Activated T-helper 1 cell treated with anti-CD3 and anti-CD28 coated beads, Interleukin-12 subunit alpha, Interleukin-12 subunit beta, Interleukin-2, Interleukin-4 antibody, amounts not matched to agents 30 ng/mL and 10 ng/mL and 1 ng/mL, durations not matched to agents 14 hours and 24 hours and 36 hours (primary cell): ENCODE measurements at regions of chr16 and their contacts with region 1.

Region 1: GRCh38 chr16:31440516-31441184 is 1.9 kb downstream of the ZNF843 start:
- DNase-seq: no peak
- H3K4me3 Mint-ChIP-seq: no peak overlapping the region
- H3K27ac Mint-ChIP-seq: no peak overlapping the region
- H3K4me1 Mint-ChIP-seq: peaks cover 19% of the 10 kb centered on the region
- H3K27me3 Mint-ChIP-seq: peaks cover 9% of the 10 kb centered on the region

Region 2: DNA sequence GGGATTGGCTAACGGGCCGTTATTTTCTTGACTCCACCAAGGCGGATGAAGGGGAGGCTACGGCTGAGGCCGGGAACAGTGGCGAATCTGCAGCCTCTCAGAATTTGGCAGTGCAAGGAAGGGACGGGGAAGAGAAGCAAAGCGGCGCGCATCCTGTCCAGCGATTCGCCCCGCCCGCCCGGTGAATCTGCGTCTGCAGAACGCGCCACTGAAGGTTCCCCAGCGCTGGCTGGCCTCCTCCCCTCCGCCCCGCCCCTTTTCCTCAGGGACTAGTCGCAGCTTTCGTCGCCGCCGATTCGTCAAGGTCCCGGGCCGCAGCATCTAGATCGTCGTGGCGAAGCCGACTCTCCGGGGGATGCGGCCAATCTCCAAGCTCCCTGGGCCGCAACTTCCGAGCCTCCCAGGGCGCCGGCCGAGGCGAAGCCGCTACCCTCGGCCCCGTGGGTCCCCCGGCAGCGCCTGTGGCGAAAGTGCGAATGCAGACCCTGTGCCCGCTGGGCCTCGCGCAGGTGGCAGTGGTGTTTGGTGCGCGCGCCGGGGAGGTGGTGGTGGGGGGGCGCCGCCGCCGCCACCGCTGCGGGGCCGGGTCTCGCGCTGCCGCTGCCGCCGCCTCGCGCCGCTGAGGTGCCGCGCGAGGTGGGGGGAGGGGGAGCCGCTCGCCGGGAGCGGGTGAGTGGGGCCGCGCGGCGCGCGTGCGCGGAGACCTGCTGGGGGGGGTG is 483.0 kb before region 1 on chr16 and contains the start of gene SETD1A:
- intact Hi-C with region 1: loop called (anchors 10 kb)
- DNase-seq: peak; percentile 93
- H3K4me3 Mint-ChIP-seq: peak within 1 kb of the TSS; percentile 96
- H3K27ac Mint-ChIP-seq: peak within 1 kb of the TSS; percentile 97
- H3K4me1 Mint-ChIP-seq: peaks cover 28% of the 10 kb centered on the region
- H3K27me3 Mint-ChIP-seq: no peaks in the 10 kb centered on the region
- total RNA-seq, gene SETD1A: 34.0 and 38.8 TPM in 2 replicates

Region 3: GRCh38 chr16:31094424-31095120 is 346.1 kb before region 1 on chr16 and contains the start of gene VKORC1:
- intact Hi-C with region 1: loop called (anchors 5 kb)
- DNase-seq: peak; percentile 84
- H3K4me3 Mint-ChIP-seq: peak within 1 kb of the TSS; percentile 95
- H3K27ac Mint-ChIP-seq: peak within 1 kb of the TSS; percentile 82
- H3K4me1 Mint-ChIP-seq: peaks cover 27% of the 10 kb centered on the region
- H3K27me3 Mint-ChIP-seq: no peaks in the 10 kb centered on the region
- total RNA-seq, gene VKORC1: 47.3 and 53.0 TPM in 2 replicates

Region 4: DNA sequence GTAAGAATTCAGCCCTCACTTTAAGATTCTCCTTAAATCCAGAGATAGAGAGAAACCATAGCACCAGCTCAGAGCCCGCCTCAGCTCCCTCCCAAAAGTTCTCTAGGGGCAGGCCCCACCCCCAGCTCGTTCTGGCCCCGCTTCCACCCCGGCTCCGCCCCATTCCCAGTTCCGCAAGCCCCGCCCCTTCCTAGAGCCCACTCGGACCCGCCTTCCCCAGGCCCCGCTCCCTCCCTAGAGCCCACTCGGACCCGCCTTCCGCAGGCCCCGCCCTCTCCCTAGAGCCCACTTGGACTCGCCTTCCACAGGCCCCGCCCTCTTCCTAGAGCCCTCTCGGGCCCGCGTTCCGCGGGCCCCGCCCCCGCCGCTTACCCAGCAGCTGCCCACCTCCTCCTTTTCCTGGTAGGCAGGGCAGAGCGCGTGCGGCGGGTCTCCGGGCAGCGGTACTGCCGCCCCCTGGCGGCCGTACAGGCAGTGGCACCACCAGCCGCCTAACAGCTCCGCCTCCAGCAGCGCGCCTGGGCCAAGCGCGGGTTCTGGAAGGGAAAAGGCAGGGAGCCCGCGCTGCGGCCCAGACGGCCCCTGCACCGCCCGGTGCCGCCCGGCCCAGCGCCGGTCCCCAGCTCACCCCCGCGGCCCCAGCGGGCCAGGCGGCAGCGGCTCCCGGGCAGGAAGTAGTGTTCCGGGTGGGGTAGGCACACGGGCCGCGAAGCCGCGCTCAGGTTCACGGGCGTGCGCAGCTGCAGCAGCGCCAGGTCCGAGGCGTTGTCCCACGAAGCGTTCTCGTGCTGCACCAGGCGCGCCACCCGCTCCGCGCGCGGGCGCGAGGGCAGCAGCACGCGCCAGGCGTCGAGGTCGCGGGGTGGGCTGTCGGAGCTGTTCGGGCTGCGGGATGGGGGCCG is 298.3 kb before region 1 on chr16:
- intact Hi-C with region 1: loop called (anchors 1 kb)
- DNase-seq: peak; percentile 98
- H3K4me3 Mint-ChIP-seq: peak overlapping the region; percentile 78
- H3K27ac Mint-ChIP-seq: peak overlapping the region; percentile 88
- H3K4me1 Mint-ChIP-seq: peaks cover 12% of the 10 kb centered on the region
- H3K27me3 Mint-ChIP-seq: peaks cover 13% of the 10 kb centered on the region

Region 5: GRCh38 chr16:31202414-31203375 is 238.0 kb before region 1 on chr16 and contains the start of gene PYCARD:
- intact Hi-C with region 1: loop called (anchors 1 kb)
- DNase-seq: no peak
- H3K4me3 Mint-ChIP-seq: peak within 1 kb of the TSS; percentile 85
- H3K27ac Mint-ChIP-seq: peak within 1 kb of the TSS; percentile 80
- H3K4me1 Mint-ChIP-seq: peaks cover 55% of the 10 kb centered on the region
- H3K27me3 Mint-ChIP-seq: peaks cover 5% of the 10 kb centered on the region
- total RNA-seq, gene PYCARD: 20.9 and 21.2 TPM in 2 replicates

Region 6: GRCh38 chr16:31301708-31302400 is 138.8 kb before region 1 on chr16:
- intact Hi-C with region 1: loop called (anchors 2 kb)
- DNase-seq: no peak
- H3K4me3 Mint-ChIP-seq: no peak overlapping the region
- H3K27ac Mint-ChIP-seq: no peak overlapping the region
- H3K4me1 Mint-ChIP-seq: peaks cover 14% of the 10 kb centered on the region
- H3K27me3 Mint-ChIP-seq: peaks cover 20% of the 10 kb centered on the region

Region 7: GRCh38 chr16:31421587-31421986 is 19.1 kb before region 1 on chr16:
- intact Hi-C with region 1: loop called (anchors 2 kb)
- DNase-seq: peak; percentile 69
- H3K4me3 Mint-ChIP-seq: peak overlapping the region; percentile 44
- H3K27ac Mint-ChIP-seq: peak overlapping the region; percentile 77
- H3K4me1 Mint-ChIP-seq: peaks cover 62% of the 10 kb centered on the region
- H3K27me3 Mint-ChIP-seq: peaks cover 2% of the 10 kb centered on the region